Sigmoid colon (tissue), 7 donors: ENCODE measurements at regions of chr10 and their contacts with region 1.

Region 1: GRCh38 chr10:4267086-4267773 is 482.2 kb upstream of the KLF6 start:
- DNase-seq: no peak
- H3K4me3 ChIP-seq: no peak overlapping the region
- H3K27ac ChIP-seq: peak overlapping the region; percentile 30 to 59 (median 41)
- H3K4me1 ChIP-seq: peaks cover 0 to 49% (median 38%) of the 10 kb centered on the region in 4 donors
- H3K27me3 ChIP-seq: no peaks in the 10 kb centered on the region
- CTCF ChIP-seq: peak in 1 of 4 experiments; percentile 12
- EP300 ChIP-seq: no peak
- POLR2A ChIP-seq: no peak

Region 2: DNA sequence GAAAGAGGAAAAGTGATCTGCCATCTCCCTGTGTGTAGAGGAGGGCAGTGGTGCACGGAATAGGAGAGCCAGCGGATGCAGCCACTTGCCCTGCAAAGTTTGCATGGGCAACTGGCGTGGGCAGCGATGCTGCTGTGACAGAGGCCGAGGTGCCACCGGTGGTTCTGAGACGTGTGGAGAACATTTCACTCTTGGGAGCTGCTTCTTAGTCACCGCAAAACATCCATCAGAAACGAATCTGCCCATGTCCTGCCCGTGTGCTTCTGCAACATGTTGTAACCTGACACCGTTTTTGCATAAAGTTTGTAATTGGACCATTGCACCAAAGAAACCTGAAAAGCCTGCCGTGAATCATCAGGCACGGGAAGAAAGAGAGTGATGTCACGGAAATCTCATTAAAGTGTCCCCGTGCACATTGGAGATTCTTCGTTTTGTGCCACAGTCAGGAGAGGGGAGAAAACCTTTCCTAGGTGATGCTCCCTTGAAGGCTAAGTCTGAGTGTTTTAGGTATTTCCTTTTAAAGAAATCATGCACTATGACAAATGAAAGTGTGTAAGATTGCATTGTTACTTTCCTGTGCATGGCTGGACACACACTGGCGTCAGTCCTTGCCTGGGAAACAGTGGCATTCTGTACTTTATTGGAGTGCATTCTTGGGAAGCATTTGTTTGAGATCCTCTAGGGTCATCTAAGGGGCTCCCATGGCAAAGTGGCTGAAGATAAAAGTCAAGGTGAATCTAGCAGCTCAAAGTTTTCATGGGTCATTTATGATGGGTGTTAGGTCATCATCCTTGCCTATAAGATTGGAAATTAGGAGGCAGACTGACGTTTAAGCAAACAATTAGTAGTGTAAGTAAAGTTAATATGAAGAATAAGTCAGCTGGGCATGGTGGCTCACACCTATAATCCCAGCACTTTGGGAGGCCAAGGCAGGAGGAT is 784.8 kb before region 1 on chr10:
- intact Hi-C with region 1: loop called (anchors 10 kb)
- DNase-seq: peak; percentile 88
- H3K4me3 ChIP-seq: peak overlapping the region in 1 of 4 donors; percentile 14
- H3K27ac ChIP-seq: peak overlapping the region; percentile 42 to 85 (median 76)
- H3K4me1 ChIP-seq: peaks cover 0 to 30% (median 29%) of the 10 kb centered on the region in 4 donors
- H3K27me3 ChIP-seq: no peaks in the 10 kb centered on the region
- CTCF ChIP-seq: no peak
- EP300 ChIP-seq: peak; percentile 81 to 98 (median 94)
- POLR2A ChIP-seq: no peak